ENCODE measurements at regions of chr1 and their contacts with region 1.

Region 1: DNA sequence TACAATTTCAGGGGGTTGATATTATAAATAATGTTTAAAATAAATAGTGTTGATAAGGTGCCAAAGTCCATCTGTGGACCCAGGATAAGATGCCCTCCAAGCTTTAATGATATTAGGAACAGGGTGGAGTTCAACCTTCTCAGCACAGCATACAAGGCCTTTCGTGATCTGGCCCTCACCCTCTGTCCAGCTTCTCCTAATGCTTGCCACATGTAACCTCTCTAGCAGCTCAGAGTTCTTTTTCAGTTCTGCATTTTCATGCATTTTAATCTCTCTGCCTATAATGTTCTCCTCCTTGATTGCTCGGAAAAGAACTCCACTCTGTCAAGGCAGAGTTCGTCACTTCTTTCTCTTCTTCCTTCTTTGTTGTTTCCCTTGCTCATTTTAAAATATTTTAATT is 21.4 kb upstream of the SMAP2 start:
- H3K4me3 Mint-ChIP-seq: no peak overlapping the region
- H3K27ac Mint-ChIP-seq: peak overlapping the region; percentile 92
- H3K4me1 Mint-ChIP-seq: peaks cover 76% of the 10 kb centered on the region
- H3K27me3 Mint-ChIP-seq: no peaks in the 10 kb centered on the region

Region 2: GRCh38 chr1:40394491-40395172 is 42.5 kb after region 1 on chr1:
- intact Hi-C with region 1: loop called (anchors 2 kb)
- H3K4me3 Mint-ChIP-seq: peak overlapping the region; percentile 20
- H3K27ac Mint-ChIP-seq: peak overlapping the region; percentile 76
- H3K4me1 Mint-ChIP-seq: peaks cover 68% of the 10 kb centered on the region
- H3K27me3 Mint-ChIP-seq: no peaks in the 10 kb centered on the region